ENCODE measurements at regions of chr14 and their contacts with region 1.

Region 1: GRCh38 chr14:70821584-70822529 is 12.5 kb upstream of the MAP3K9 start:
- DNase-seq: peak; percentile 71
- H3K4me3 ChIP-seq: peak overlapping the region; percentile 81
- H3K27ac ChIP-seq: peak overlapping the region; percentile 79
- H3K4me1 ChIP-seq: peaks cover 15% of the 10 kb centered on the region
- H3K27me3 ChIP-seq: no peaks in the 10 kb centered on the region
- CTCF ChIP-seq: no peak

Region 2: DNA sequence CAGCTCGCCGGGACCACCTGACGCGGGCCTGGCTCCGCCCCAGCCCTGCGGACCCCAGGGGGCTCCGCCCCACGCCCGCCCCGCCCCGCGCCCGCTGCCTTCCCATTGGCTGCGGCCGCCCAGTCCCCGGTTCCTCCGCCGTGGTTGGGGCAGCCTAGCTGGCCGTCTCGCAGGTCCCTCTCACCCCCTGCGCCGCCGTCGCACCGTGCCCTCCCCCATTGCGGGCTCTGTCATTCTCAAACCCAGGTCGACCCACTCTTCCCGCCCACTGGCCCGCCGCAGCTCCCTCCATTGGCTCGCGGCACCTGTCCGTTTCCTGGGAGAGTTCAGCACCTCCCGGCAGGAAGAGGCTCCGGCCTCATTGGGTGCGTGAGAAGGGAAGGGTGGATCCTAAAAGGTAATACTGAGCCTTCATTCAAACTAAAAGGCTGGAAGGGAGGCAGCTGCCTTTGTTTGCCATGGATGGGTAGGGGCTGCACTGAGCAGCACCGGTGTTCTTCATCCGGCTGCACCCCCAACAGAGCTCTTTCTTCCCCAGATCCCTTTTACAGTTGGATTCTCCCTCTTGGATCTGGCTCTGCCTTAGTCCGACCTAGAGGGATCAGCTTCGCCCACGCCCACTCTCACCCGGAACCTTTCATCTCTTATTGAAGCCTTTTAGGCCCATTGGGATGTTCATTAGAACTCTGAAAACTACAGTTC is 12.2 kb before region 1 on chr14:
- CTCF ChIA-PET with region 1: interaction called, 14 read pairs
- POLR2A ChIA-PET with region 1: no interaction called
- intact Hi-C with region 1: no loop called
- DNase-seq: peak; percentile 96
- H3K4me3 ChIP-seq: peak overlapping the region; percentile 78
- H3K27ac ChIP-seq: peak overlapping the region; percentile 32
- H3K4me1 ChIP-seq: no peaks in the 10 kb centered on the region
- H3K27me3 ChIP-seq: peaks cover 4% of the 10 kb centered on the region
- CTCF ChIP-seq: no peak

Region 3: GRCh38 chr14:70955543-70956480 is 134.0 kb after region 1 on chr14:
- CTCF ChIA-PET with region 1: interaction called, 16 read pairs
- POLR2A ChIA-PET with region 1: no interaction called
- intact Hi-C with region 1: loop called (anchors 5 kb)
- DNase-seq: peak; percentile 60
- H3K4me3 ChIP-seq: no peak overlapping the region
- H3K27ac ChIP-seq: no peak overlapping the region
- H3K4me1 ChIP-seq: peaks cover 14% of the 10 kb centered on the region
- H3K27me3 ChIP-seq: no peaks in the 10 kb centered on the region
- CTCF ChIP-seq: peak; percentile 74

Region 4: DNA sequence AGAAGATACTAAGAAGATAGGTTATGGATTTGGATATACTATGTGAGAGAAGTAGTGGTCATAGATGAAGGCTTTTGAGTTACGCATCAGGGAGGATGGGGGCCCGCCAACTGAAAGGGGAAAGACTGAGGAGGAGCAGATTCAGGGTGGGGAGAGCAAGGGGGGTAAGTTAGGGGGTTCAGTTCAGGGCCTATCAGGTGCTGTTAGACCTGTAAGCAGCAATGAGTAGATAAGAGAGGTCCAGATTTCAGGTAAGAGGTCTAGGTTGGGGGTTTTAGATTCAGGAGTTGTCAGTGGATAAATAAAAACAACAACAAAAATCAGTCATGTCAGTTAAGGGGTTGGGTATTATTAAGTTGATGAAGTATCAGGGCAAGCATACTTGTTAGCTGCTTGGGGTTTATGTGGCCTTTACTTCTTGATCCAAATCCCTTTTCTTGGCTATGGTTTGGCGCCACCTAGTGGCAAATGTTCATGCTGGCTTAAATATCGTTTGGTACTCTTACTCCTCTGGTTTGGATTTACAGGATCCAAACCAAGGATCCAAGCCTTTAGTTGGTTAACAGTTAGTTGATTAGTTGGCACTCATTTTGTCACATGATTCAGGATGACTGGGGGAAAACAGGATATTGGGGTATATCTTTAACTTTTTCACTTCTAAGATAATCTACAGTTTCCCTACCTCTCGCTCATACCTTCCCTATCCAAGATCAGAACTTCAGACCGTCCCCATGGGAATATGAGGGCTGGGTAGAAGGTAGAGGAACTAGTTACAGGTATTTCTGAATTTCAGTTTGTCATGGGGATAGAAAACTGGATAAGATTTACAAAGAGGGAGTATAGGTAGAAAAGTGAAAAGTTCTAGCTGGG is 150.5 kb after region 1 on chr14:
- CTCF ChIA-PET with region 1: interaction called, 10 read pairs
- POLR2A ChIA-PET with region 1: no interaction called
- intact Hi-C with region 1: loop called (anchors 1 kb)
- DNase-seq: peak; percentile 91
- H3K4me3 ChIP-seq: no peak overlapping the region
- H3K27ac ChIP-seq: no peak overlapping the region
- H3K4me1 ChIP-seq: peaks cover 6% of the 10 kb centered on the region
- H3K27me3 ChIP-seq: no peaks in the 10 kb centered on the region
- CTCF ChIP-seq: peak; percentile 90